CD4-positive, alpha-beta T cell (primary cell): ENCODE measurements at regions of chr14 and their contacts with region 1.

Region 1: GRCh38 chr14:31926123-31926522 is 151.0 kb upstream of the ARHGAP5 start:
- DNase-seq: peak in 4 of 14 experiments; percentile 23 to 66 (median 64)
- ATAC-seq: peak; percentile 43
- H3K4me3 ChIP-seq: no peak overlapping the region
- H3K4me3 Mint-ChIP-seq: no peak overlapping the region
- H3K27ac ChIP-seq: no peak overlapping the region
- H3K27ac Mint-ChIP-seq: no peak overlapping the region
- H3K4me1 ChIP-seq: no peaks in the 10 kb centered on the region
- H3K4me1 Mint-ChIP-seq: peaks cover 11% of the 10 kb centered on the region
- H3K27me3 ChIP-seq: no peaks in the 10 kb centered on the region
- H3K27me3 Mint-ChIP-seq: no peaks in the 10 kb centered on the region
- CTCF ChIP-seq: peak; percentile 64

Region 2: GRCh38 chr14:31510222-31510621 is 415.9 kb before region 1 on chr14:
- CTCF ChIA-PET with region 1: no interaction called
- POLR2A ChIA-PET with region 1: no interaction called
- intact Hi-C with region 1: loop called in 1 of 2 experiments (anchors 10 kb)
- DNase-seq: peak in 3 of 14 experiments; percentile 29 to 36 (median 29)
- ATAC-seq: no peak
- H3K4me3 ChIP-seq: no peak overlapping the region
- H3K4me3 Mint-ChIP-seq: no peak overlapping the region
- H3K27ac ChIP-seq: no peak overlapping the region
- H3K27ac Mint-ChIP-seq: no peak overlapping the region
- H3K4me1 ChIP-seq: no peaks in the 10 kb centered on the region
- H3K4me1 Mint-ChIP-seq: no peaks in the 10 kb centered on the region
- H3K27me3 ChIP-seq: no peaks in the 10 kb centered on the region
- H3K27me3 Mint-ChIP-seq: no peaks in the 10 kb centered on the region
- CTCF ChIP-seq: peak; percentile 73

Region 3: GRCh38 chr14:31950764-31951637 is 24.9 kb after region 1 on chr14:
- CTCF ChIA-PET with region 1: no interaction called
- POLR2A ChIA-PET with region 1: no interaction called
- intact Hi-C with region 1: no loop called
- DNase-seq: no peak
- ATAC-seq: no peak
- H3K4me3 ChIP-seq: no peak overlapping the region
- H3K4me3 Mint-ChIP-seq: no peak overlapping the region
- H3K27ac ChIP-seq: no peak overlapping the region
- H3K27ac Mint-ChIP-seq: no peak overlapping the region
- H3K4me1 ChIP-seq: peaks cover 9% of the 10 kb centered on the region
- H3K4me1 Mint-ChIP-seq: peaks cover 20% of the 10 kb centered on the region
- H3K27me3 ChIP-seq: no peaks in the 10 kb centered on the region
- H3K27me3 Mint-ChIP-seq: peaks cover 8% of the 10 kb centered on the region
- CTCF ChIP-seq: no peak

Region 4: GRCh38 chr14:32263939-32264567 is 337.9 kb after region 1 on chr14:
- CTCF ChIA-PET with region 1: no interaction called
- POLR2A ChIA-PET with region 1: no interaction called
- intact Hi-C with region 1: no loop called
- DNase-seq: no peak
- ATAC-seq: no peak
- H3K4me3 ChIP-seq: no peak overlapping the region
- H3K4me3 Mint-ChIP-seq: no peak overlapping the region
- H3K27ac ChIP-seq: no peak overlapping the region
- H3K27ac Mint-ChIP-seq: no peak overlapping the region
- H3K4me1 ChIP-seq: no peaks in the 10 kb centered on the region
- H3K4me1 Mint-ChIP-seq: no peaks in the 10 kb centered on the region
- H3K27me3 ChIP-seq: no peaks in the 10 kb centered on the region
- H3K27me3 Mint-ChIP-seq: peaks cover 4% of the 10 kb centered on the region
- CTCF ChIP-seq: no peak

Region 5: GRCh38 chr14:32319362-32320049 is 393.4 kb after region 1 on chr14:
- CTCF ChIA-PET with region 1: no interaction called
- POLR2A ChIA-PET with region 1: no interaction called
- intact Hi-C with region 1: no loop called
- DNase-seq: no peak
- ATAC-seq: no peak
- H3K4me3 ChIP-seq: no peak overlapping the region
- H3K4me3 Mint-ChIP-seq: no peak overlapping the region
- H3K27ac ChIP-seq: no peak overlapping the region
- H3K27ac Mint-ChIP-seq: no peak overlapping the region
- H3K4me1 ChIP-seq: no peaks in the 10 kb centered on the region
- H3K4me1 Mint-ChIP-seq: no peaks in the 10 kb centered on the region
- H3K27me3 ChIP-seq: no peaks in the 10 kb centered on the region
- H3K27me3 Mint-ChIP-seq: peaks cover 3% of the 10 kb centered on the region
- CTCF ChIP-seq: no peak